Activated CD8-positive, alpha-beta T cell treated with anti-CD3 and anti-CD28 coated beads for 36 hours (primary cell): ENCODE measurements at regions of chr5 and their contacts with region 1.

Region 1: GRCh38 chr5:96614110-96614691 is 48.0 kb upstream of the CAST start:
- DNase-seq: peak; percentile 59
- ATAC-seq: peak; percentile 51
- H3K4me3 Mint-ChIP-seq: no peak overlapping the region
- H3K27ac Mint-ChIP-seq: no peak overlapping the region
- H3K4me1 Mint-ChIP-seq: peaks cover 4% of the 10 kb centered on the region
- H3K27me3 Mint-ChIP-seq: peaks cover 11% of the 10 kb centered on the region
- CTCF ChIP-seq: peak; percentile 80

Region 2: DNA sequence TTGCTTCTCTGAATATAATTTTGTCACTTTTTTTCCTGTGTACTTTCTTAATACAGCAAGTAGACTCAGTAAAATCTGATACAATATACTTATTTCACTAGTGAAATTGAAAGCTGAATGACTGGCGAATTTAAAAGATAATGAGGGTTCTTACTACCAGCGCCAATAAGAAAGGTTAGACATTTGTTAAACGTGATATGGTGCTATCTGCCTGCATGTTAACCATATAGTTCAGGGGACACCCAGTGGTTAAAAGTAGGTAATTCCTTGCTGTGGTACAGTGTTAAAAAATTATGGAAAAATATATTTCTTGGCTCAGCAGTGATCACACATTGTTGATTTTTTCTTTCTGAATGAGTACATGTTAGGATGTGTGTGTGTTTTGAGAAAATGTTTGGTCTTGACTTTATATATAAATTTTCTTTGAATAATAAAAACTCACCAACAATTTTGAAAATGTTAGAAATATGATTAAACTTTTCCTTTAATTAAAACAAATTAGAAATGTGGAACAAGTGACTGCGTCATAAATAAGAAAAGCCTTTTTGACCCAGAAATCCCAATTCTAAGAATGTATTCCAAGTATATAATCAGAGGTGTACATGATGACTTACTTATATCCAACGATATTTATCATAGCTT is 73.7 kb after region 1 on chr5:
- CTCF ChIA-PET with region 1: interaction called, 32 read pairs
- POLR2A ChIA-PET with region 1: interaction called, 3 read pairs
- intact Hi-C with region 1: loop called (anchors 5 kb)
- DNase-seq: no peak
- ATAC-seq: peak; percentile 90
- H3K4me3 Mint-ChIP-seq: no peak overlapping the region
- H3K27ac Mint-ChIP-seq: no peak overlapping the region
- H3K4me1 Mint-ChIP-seq: peaks cover 19% of the 10 kb centered on the region
- H3K27me3 Mint-ChIP-seq: no peaks in the 10 kb centered on the region
- CTCF ChIP-seq: peak; percentile 66

Region 3: DNA sequence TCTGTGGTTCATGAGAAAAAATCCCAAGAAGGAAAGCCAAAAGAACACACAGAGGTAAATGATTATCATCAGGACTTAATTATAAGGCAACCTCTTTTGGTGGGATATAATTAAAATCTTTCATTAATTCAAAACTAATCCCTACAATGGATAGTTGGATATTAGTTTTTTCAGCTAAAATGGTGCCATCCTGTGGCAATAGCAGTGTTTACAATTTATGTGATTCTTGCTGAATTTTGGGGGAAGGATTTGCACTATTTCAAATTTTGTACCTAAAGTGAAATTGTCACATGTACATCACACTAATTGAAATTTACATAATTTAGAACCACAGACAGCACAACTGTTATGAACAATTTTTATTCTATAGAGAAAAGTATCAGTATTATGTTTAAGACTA is 115.0 kb after region 1 on chr5:
- CTCF ChIA-PET with region 1: interaction called, 20 read pairs
- POLR2A ChIA-PET with region 1: no interaction called
- intact Hi-C with region 1: no loop called
- DNase-seq: no peak
- ATAC-seq: no peak
- H3K4me3 Mint-ChIP-seq: no peak overlapping the region
- H3K27ac Mint-ChIP-seq: no peak overlapping the region
- H3K4me1 Mint-ChIP-seq: peaks cover 3% of the 10 kb centered on the region
- H3K27me3 Mint-ChIP-seq: no peaks in the 10 kb centered on the region
- CTCF ChIP-seq: peak; percentile 24

Region 4: GRCh38 chr5:96743065-96743768 is 129.0 kb after region 1 on chr5:
- CTCF ChIA-PET with region 1: interaction called, 3 read pairs
- POLR2A ChIA-PET with region 1: no interaction called
- intact Hi-C with region 1: loop called (anchors 10 kb)
- DNase-seq: no peak
- ATAC-seq: no peak
- H3K4me3 Mint-ChIP-seq: no peak overlapping the region
- H3K27ac Mint-ChIP-seq: peak overlapping the region; percentile 69
- H3K4me1 Mint-ChIP-seq: peaks cover 37% of the 10 kb centered on the region
- H3K27me3 Mint-ChIP-seq: no peaks in the 10 kb centered on the region
- CTCF ChIP-seq: no peak